BJ (cell line): ENCODE measurements at regions of chr2 and their contacts with region 1.

Region 1: GRCh38 chr2:113198790-113199612 is 25.2 kb downstream of the PSD4 start:
- DNase-seq: no peak
- H3K4me3 ChIP-seq: peak overlapping the region; percentile 66
- H3K27me3 ChIP-seq: no peaks in the 10 kb centered on the region
- CTCF ChIP-seq: peak; percentile 67

Region 2: GRCh38 chr2:113080134-113080533 is 118.9 kb before region 1 on chr2:
- CTCF ChIA-PET with region 1: interaction called, 13 read pairs
- POLR2A ChIA-PET with region 1: no interaction called
- DNase-seq: no peak
- H3K4me3 ChIP-seq: no peak overlapping the region
- H3K27me3 ChIP-seq: peaks cover 8% of the 10 kb centered on the region
- CTCF ChIP-seq: peak; percentile 77

Region 3: GRCh38 chr2:113171334-113172075 is 27.5 kb before region 1 on chr2:
- CTCF ChIA-PET with region 1: interaction called, 12 read pairs
- POLR2A ChIA-PET with region 1: no interaction called
- DNase-seq: no peak
- H3K4me3 ChIP-seq: no peak overlapping the region
- H3K27me3 ChIP-seq: no peaks in the 10 kb centered on the region
- CTCF ChIP-seq: no peak

Region 4: GRCh38 chr2:113211226-113212105 is 12.5 kb after region 1 on chr2:
- CTCF ChIA-PET with region 1: interaction called, 15 read pairs
- POLR2A ChIA-PET with region 1: interaction called, 5 read pairs
- DNase-seq: peak; percentile 34
- H3K4me3 ChIP-seq: no peak overlapping the region
- H3K27me3 ChIP-seq: no peaks in the 10 kb centered on the region
- CTCF ChIP-seq: no peak

Region 5: GRCh38 chr2:113257516-113258264 is 58.7 kb after region 1 on chr2:
- CTCF ChIA-PET with region 1: interaction called, 11 read pairs
- POLR2A ChIA-PET with region 1: no interaction called
- DNase-seq: no peak
- H3K4me3 ChIP-seq: no peak overlapping the region
- H3K27me3 ChIP-seq: peaks cover 1% of the 10 kb centered on the region; the same call in 1 of the 2 replicates
- CTCF ChIP-seq: no peak